ENCODE measurements at regions of chr6 and their contacts with region 1.

Region 1: DNA sequence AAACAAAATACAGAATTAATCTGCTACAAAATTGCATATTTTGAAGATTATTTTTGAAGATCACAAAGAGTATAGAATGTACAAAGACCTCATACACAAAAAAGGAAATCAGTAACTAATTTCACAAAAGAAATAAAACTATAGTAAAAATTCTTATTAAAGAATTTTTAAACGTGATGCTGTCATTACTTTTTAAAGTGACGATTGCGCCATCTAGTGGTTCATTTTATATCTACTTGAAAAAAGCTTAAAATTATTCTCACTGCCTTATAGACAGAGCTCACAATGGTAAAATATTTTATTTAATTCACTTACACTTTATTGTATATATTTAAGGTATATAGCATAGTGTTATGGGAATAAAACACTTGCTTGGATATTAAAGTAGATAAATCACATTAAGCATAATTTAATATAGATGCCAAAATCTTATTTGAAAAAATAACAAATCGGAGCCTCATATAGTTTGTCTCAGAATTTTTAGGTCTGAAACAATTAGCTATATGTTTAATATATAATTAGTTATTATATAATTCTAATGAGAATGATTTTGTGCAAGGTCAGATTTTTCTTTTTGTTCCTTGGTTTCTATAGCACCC is 128.8 kb downstream of the PHF3 start:
- DNase-seq: peak in 3 of 4 experiments; percentile 14 to 54 (median 17)
- ATAC-seq: peak; percentile 53; the same call in 2 of the 3 replicates
- H3K4me3 ChIP-seq: no peak overlapping the region
- H3K27ac ChIP-seq: no peak overlapping the region
- H3K4me1 ChIP-seq: no peaks in the 10 kb centered on the region
- H3K27me3 ChIP-seq: no peaks in the 10 kb centered on the region
- CTCF ChIP-seq: peak in 2 of 3 experiments; percentile 24 to 70; a peak in 3 of 6 replicates
- EP300 ChIP-seq: no peak
- POLR2A ChIP-seq: no peak
- RAD21 ChIP-seq: peak; percentile 69 to 71

Region 2: GRCh38 chr6:63307581-63308246 is 456.7 kb before region 1 on chr6:
- CTCF ChIA-PET with region 1: interaction called, 5 read pairs
- POLR2A ChIA-PET with region 1: no interaction called
- in situ Hi-C with region 1: no loop called
- intact Hi-C with region 1: loop called (anchors 2 kb)
- DNase-seq: peak in 2 of 4 experiments; percentile 10 to 20
- ATAC-seq: peak; percentile 82
- H3K4me3 ChIP-seq: no peak overlapping the region
- H3K27ac ChIP-seq: no peak overlapping the region
- H3K4me1 ChIP-seq: no peaks in the 10 kb centered on the region
- H3K27me3 ChIP-seq: no peaks in the 10 kb centered on the region
- CTCF ChIP-seq: peak in 2 of 3 experiments; percentile 11 to 35; a peak in 2 of 6 replicates
- EP300 ChIP-seq: no peak
- POLR2A ChIP-seq: no peak
- RAD21 ChIP-seq: peak; percentile 52 to 59

Region 3: GRCh38 chr6:63352587-63353285 is 411.7 kb before region 1 on chr6:
- CTCF ChIA-PET with region 1: interaction called, 3 read pairs
- POLR2A ChIA-PET with region 1: no interaction called
- in situ Hi-C with region 1: no loop called
- intact Hi-C with region 1: loop called (anchors 2 kb)
- DNase-seq: no peak
- ATAC-seq: no peak
- H3K4me3 ChIP-seq: no peak overlapping the region
- H3K27ac ChIP-seq: no peak overlapping the region
- H3K4me1 ChIP-seq: no peaks in the 10 kb centered on the region
- H3K27me3 ChIP-seq: no peaks in the 10 kb centered on the region
- CTCF ChIP-seq: no peak; a peak in 1 of 6 replicates
- EP300 ChIP-seq: no peak
- POLR2A ChIP-seq: no peak
- RAD21 ChIP-seq: peak; percentile 39 to 44; a peak in 3 of 4 replicates

Region 4: GRCh38 chr6:63465750-63466149 is 298.7 kb before region 1 on chr6:
- CTCF ChIA-PET with region 1: no interaction called
- POLR2A ChIA-PET with region 1: no interaction called
- in situ Hi-C with region 1: no loop called
- intact Hi-C with region 1: loop called (anchors 10 kb)
- DNase-seq: no peak
- ATAC-seq: no peak
- H3K4me3 ChIP-seq: no peak overlapping the region
- H3K27ac ChIP-seq: no peak overlapping the region
- H3K4me1 ChIP-seq: no peaks in the 10 kb centered on the region
- H3K27me3 ChIP-seq: no peaks in the 10 kb centered on the region
- CTCF ChIP-seq: no peak
- EP300 ChIP-seq: no peak
- POLR2A ChIP-seq: no peak
- RAD21 ChIP-seq: no peak